MCF 10A (cell line): ENCODE measurements at regions of chr7 and their contacts with region 1.

Region 1: DNA sequence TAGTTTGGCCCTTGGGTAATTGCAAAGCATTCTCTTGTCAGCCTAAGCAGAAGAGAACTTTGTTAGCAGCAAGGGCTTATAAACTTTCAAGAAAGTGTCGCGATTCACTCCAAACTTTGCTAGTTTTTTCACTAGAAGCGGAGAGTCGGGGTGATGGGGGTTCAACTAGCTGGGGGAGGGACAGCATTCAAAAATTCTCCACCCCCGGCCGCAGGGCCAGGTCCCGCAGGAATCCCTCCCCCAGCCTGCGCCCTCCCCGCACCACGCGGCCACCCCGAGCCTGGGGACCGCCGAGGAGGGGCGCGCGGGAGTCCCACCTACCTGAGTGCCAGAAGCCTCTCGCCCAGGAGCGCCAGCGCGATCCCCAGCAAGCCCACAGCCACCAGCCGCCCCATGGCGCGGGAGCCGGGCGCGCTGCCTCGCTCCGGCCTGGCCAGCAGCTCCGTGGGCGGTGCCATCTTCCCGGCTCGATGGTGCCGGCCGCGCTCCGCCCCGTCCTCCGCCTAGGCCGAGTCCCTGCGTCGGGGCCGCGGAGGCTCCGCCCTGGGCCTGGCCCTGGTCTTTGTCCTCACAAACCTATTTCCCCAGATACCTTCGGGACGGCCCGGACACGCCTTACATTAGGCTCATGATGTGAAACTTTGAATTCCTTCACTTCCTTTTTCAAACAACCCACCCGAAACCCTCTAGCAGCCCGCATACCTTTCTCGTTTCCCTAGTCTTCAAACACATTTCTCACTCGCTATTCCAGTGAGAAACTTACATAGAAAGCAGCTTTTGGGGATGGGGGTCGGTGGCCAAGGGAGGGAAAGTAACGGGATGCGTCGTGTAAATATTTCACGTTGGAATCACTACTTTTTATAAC is at the start of gene PON2:
- DNase-seq: peak; percentile 94
- H3K4me3 Mint-ChIP-seq: peak within 1 kb of the TSS; percentile 77
- H3K27ac Mint-ChIP-seq: peak within 1 kb of the TSS; percentile 96
- H3K4me1 Mint-ChIP-seq: peaks cover 48% of the 10 kb centered on the region
- H3K27me3 Mint-ChIP-seq: no peaks in the 10 kb centered on the region
- CTCF ChIP-seq: no peak
- total RNA-seq, gene PON2: 120 and 140 TPM in 2 replicates

Region 2: DNA sequence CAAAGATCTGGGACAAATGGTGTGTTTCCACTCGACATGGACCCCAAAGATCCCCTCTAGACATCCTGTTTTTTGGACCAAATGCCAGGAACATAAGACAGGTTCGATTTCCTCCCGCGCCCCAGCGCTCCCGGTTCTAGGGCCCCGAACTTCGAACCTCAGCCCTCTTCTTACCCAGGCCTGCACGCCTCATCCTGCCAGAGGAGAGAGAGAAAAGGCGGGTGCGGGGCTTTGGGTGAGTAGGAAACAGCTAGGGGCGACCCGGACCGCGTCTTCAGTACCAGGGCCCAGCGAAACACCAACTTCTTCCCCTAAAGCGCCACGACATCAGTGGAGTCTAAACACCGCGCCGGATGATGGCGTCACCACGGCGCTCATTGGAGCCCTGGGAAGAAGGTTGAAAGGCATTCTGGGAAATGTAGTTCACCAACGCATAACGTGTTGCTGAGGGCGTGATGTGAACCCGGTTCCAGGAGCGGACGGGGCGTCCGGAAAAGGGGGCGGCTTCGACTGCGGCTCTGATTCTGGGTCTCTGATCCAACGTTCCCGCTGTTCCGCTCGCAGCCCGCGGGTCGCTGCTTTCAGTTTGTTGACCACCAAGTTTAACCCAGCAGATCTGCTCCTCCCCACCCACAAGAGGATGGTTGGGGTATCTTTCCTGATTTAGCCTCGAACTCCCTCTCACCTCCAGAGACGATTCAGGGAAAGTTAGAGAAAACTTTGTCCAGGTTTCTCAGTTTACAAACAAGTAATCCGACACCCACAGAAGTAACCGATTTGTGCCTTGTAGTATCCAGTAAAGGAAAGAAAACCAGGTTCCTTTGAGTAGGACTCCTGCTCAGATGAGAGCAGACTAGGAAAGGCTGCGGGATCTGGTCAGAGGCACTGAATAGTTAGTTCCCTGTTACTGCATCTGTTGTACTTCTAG is 1430.5 kb before region 1 on chr7 and contains the start of gene BET1:
- CTCF ChIA-PET with region 1: no interaction called
- POLR2A ChIA-PET with region 1: no interaction called
- intact Hi-C with region 1: loop called (anchors 10 kb)
- DNase-seq: peak; percentile 98
- H3K4me3 Mint-ChIP-seq: peak within 1 kb of the TSS; percentile 100
- H3K27ac Mint-ChIP-seq: peak within 1 kb of the TSS; percentile 100
- H3K4me1 Mint-ChIP-seq: peaks cover 19% of the 10 kb centered on the region
- H3K27me3 Mint-ChIP-seq: no peaks in the 10 kb centered on the region
- CTCF ChIP-seq: no peak
- total RNA-seq, gene BET1: 54.4 and 72.7 TPM in 2 replicates

Region 3: GRCh38 chr7:95444796-95445195 is 10.0 kb after region 1 on chr7:
- CTCF ChIA-PET with region 1: interaction called, 3 read pairs
- POLR2A ChIA-PET with region 1: interaction called, 22 read pairs
- intact Hi-C with region 1: no loop called
- DNase-seq: no peak
- H3K4me3 Mint-ChIP-seq: no peak overlapping the region
- H3K27ac Mint-ChIP-seq: no peak overlapping the region
- H3K4me1 Mint-ChIP-seq: peaks cover 21% of the 10 kb centered on the region
- H3K27me3 Mint-ChIP-seq: no peaks in the 10 kb centered on the region
- CTCF ChIP-seq: no peak